A673 (cell line): ENCODE measurements at regions of chr1 and their contacts with region 1.

Region 1: DNA sequence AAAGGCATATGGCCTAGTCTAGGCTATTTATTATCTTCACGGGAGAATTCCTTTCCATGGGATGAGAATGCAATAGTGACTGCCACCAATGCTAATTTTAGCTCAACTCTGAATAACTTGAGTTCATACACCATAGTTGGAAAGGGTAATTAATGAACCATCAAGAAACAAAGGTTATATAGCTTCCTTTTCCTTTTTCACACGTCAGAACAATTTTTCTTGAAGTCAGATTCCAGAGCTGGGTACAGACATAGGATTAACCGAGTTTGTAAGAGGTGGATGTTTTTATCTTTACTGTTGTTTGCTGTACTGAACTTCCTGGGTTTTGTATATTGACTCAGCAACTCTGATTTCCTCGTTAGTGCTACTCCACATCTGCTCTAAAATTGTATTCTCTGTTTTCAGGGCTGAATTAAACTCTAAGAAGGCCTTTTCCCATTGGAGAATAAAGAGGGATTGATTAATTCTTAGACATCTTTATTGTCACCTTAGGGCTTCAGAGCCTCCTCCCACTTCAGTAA is 262.0 kb downstream of the NUF2 start:
- DNase-seq: peak; percentile 59
- H3K4me3 ChIP-seq: no peak overlapping the region
- H3K27ac ChIP-seq: peak overlapping the region; percentile 98
- H3K4me1 ChIP-seq: peaks cover 54% of the 10 kb centered on the region
- H3K27me3 ChIP-seq: no peaks in the 10 kb centered on the region
- CTCF ChIP-seq: no peak

Region 2: GRCh38 chr1:162847839-162848453 is 735.8 kb before region 1 on chr1:
- CTCF ChIA-PET with region 1: no interaction called
- POLR2A ChIA-PET with region 1: no interaction called
- intact Hi-C with region 1: loop called (anchors 10 kb)
- DNase-seq: peak; percentile 89
- H3K4me3 ChIP-seq: no peak overlapping the region
- H3K27ac ChIP-seq: peak overlapping the region; percentile 20
- H3K4me1 ChIP-seq: peaks cover 53% of the 10 kb centered on the region
- H3K27me3 ChIP-seq: no peaks in the 10 kb centered on the region
- CTCF ChIP-seq: peak; percentile 94